ENCODE measurements at regions of chr3 and their contacts with region 1.

Region 1: DNA sequence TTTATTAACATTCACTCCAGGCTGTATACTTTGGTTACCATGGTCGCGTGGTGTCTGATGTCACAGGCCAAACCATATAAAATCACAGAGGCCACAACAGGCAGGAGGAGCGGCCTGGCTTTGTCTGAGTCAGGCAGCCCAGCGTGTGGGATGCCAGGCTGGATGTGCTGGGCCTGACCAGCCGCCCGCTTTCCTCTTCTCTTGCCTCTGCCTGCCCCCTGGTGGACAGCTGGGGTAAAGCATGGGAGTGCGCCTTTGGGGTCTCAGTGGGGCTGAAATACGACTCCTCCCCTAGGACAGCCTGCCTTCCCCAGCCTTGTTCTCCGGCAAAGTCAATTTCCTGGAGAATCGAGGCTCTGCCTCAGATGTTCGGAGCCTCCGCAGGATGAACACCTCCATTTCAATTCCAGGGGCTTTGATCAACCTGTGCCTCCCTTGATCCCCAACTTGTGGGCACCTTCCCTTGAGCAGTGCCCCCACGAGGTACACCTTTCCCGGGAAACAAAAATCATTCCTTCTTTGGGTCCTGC is 78.2 kb downstream of the CCNL1 start:
- DNase-seq: peak; percentile 74
- CTCF ChIP-seq: peak; percentile 95

Region 2: GRCh38 chr3:156535162-156535627 is 546.6 kb before region 1 on chr3:
- in situ Hi-C with region 1: loop called (anchors 25 kb)
- DNase-seq: no peak
- CTCF ChIP-seq: no peak

Region 3: GRCh38 chr3:156674046-156674910 is 407.5 kb before region 1 on chr3 and contains the start of gene TIPARP:
- in situ Hi-C with region 1: loop called (anchors 5 kb)
- DNase-seq: peak; percentile 97
- CTCF ChIP-seq: peak; percentile 89

Region 4: GRCh38 chr3:156826144-156826895 is 255.4 kb before region 1 on chr3 and contains the start of gene LEKR1:
- in situ Hi-C with region 1: loop called (anchors 10 kb)
- DNase-seq: peak; percentile 88
- CTCF ChIP-seq: no peak

Region 5: DNA sequence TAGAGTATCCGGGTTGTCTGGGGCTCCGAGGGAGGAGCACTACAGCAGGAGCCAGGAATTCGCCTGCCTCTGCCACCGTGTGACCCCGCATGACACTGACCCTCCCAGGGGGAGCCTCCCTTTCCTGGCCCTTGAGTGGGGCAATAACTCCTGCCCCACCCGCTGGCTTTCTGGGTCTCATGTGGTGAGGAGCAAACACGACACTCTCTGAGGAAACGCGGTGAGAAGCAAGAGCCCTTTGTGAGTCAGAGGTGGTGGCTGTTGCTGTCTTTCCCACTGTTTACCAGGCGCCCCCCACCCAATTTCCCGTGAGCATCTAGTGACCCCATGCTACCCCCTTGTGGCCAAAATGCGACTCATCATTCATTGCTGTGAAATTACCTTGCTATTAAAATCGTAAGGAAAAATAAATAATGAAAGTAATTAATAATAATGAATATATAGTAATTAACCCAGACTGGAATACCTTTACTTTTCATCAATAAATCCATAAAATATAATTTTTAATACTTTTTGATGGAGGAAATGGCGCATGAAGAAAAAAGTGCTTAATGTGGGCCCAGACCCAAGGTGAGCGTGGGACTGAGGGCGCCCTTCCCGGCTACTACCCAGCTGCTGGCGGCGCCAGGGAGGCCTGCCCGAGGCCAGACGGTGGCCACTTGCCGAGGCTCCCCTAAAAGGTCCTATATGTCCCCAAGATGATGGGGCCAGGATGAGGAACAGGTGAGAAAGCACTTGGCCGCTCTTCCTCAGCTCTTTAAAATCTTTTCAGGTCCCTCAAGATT is 48.9 kb after region 1 on chr3:
- in situ Hi-C with region 1: loop called (anchors 10 kb)
- DNase-seq: peak; percentile 48
- CTCF ChIP-seq: peak; percentile 61